ENCODE measurements at regions of chr12 and their contacts with region 1.

Region 1: GRCh38 chr12:74801625-74802024 is 264.0 kb downstream of the ATXN7L3B start:
- DNase-seq: no peak
- ATAC-seq: no peak
- H3K4me3 ChIP-seq: no peak overlapping the region
- H3K27ac ChIP-seq: no peak overlapping the region
- H3K4me1 ChIP-seq: no peaks in the 10 kb centered on the region
- H3K27me3 ChIP-seq: no peaks in the 10 kb centered on the region
- CTCF ChIP-seq: no peak

Region 2: DNA sequence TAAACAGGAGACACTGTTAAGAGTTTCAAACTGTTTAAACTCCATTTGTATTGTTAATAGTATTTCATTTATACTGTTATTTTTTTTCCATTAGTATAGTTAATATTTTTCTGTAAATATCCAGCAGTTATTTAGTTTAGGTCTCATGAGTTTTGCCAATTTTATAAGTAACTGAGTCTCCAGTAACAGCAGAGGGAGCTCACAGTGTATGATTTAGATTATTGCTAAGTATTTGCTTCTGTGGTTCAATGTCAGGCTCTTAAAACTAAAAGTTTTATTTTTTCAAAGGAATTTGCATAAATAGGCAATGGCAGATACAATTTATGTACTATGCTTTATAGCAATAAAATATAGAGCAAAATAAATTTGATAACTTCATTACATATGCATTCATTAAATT is 54.3 kb before region 1 on chr12:
- CTCF ChIA-PET with region 1: no interaction called
- POLR2A ChIA-PET with region 1: no interaction called
- intact Hi-C with region 1: loop called (anchors 5 kb)
- DNase-seq: peak; percentile 44
- ATAC-seq: peak; percentile 33; the same call in 1 of the 2 replicates
- H3K4me3 ChIP-seq: no peak overlapping the region
- H3K27ac ChIP-seq: no peak overlapping the region
- H3K4me1 ChIP-seq: no peaks in the 10 kb centered on the region
- H3K27me3 ChIP-seq: no peaks in the 10 kb centered on the region
- CTCF ChIP-seq: peak; percentile 57

Measured in PC-3 (cell line).